CD4-positive, alpha-beta T cell (primary cell): ENCODE measurements at regions of chr15 and their contacts with region 1.

Region 1: DNA sequence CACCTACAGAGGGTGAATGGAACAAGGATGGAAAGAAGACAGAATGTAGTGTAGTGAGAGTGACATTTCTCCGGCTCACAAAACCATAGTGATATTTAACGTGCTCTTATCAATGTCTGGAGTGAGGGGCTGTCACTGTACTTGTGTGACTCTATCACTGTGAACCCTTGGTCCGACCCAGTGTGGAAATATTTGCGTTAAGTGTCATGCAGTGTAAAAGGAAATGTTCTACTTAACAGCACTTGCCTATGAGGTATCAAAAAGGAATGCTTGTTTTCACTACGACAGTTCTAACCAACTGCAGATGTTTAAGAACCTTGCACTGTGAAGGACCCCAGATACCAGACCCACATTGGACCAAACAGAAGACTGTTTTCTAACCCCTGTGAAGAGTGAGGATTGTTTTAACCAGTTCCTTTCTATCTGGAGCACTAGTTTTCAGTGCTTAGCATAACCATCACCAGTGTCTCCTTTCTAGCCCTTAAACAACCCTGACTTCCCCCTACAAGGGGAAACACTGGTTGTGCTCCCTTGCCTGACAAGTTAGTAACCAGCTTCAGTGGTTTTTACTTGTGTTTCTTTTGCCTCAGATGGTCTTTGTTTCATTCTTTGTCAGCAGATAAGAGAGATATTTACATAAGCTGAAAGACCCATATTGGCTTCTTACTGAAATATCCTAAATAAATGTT is 144.7 kb upstream of the ABHD17C start:
- DNase-seq: no peak
- ATAC-seq: no peak
- H3K4me3 ChIP-seq: no peak overlapping the region
- H3K4me3 Mint-ChIP-seq: no peak overlapping the region
- H3K27ac ChIP-seq: no peak overlapping the region
- H3K27ac Mint-ChIP-seq: no peak overlapping the region
- H3K4me1 ChIP-seq: no peaks in the 10 kb centered on the region
- H3K4me1 Mint-ChIP-seq: no peaks in the 10 kb centered on the region
- H3K27me3 ChIP-seq: peaks cover 0 to 6% of the 10 kb centered on the region in 2 experiments
- H3K27me3 Mint-ChIP-seq: peaks cover 42% of the 10 kb centered on the region
- CTCF ChIP-seq: no peak

Region 2: GRCh38 chr15:80494351-80494751 is 56.0 kb before region 1 on chr15:
- CTCF ChIA-PET with region 1: no interaction called
- POLR2A ChIA-PET with region 1: no interaction called
- intact Hi-C with region 1: loop called in 1 of 2 experiments (anchors 10 kb)
- DNase-seq: no peak
- ATAC-seq: no peak
- H3K4me3 ChIP-seq: no peak overlapping the region
- H3K4me3 Mint-ChIP-seq: no peak overlapping the region
- H3K27ac ChIP-seq: no peak overlapping the region
- H3K27ac Mint-ChIP-seq: no peak overlapping the region
- H3K4me1 ChIP-seq: no peaks in the 10 kb centered on the region
- H3K4me1 Mint-ChIP-seq: no peaks in the 10 kb centered on the region
- H3K27me3 ChIP-seq: peaks cover 0 to 2% of the 10 kb centered on the region in 2 experiments
- H3K27me3 Mint-ChIP-seq: peaks cover 9% of the 10 kb centered on the region
- CTCF ChIP-seq: no peak